ENCODE measurements at regions of chr3 and their contacts with region 1.

Region 1: GRCh38 chr3:49445381-49445780 is 16.3 kb upstream of the NICN1 start:
- DNase-seq: no peak

Region 2: GRCh38 chr3:47455806-47456452 is 1989.5 kb before region 1 on chr3:
- intact Hi-C with region 1: no loop called
- DNase-seq: no peak

Region 3: GRCh38 chr3:49339945-49340800 is 105.2 kb before region 1 on chr3 and contains the start of gene USP4:
- intact Hi-C with region 1: loop called (anchors 5 to 10 kb)
- DNase-seq: peak; percentile 97
- total RNA-seq, gene USP4: 49.0 to 54.6 TPM

Region 4: GRCh38 chr3:49512771-49513358 is 67.5 kb after region 1 on chr3:
- intact Hi-C with region 1: no loop called
- DNase-seq: no peak